ENCODE measurements at regions of chr14 and their contacts with region 1.

Region 1: DNA sequence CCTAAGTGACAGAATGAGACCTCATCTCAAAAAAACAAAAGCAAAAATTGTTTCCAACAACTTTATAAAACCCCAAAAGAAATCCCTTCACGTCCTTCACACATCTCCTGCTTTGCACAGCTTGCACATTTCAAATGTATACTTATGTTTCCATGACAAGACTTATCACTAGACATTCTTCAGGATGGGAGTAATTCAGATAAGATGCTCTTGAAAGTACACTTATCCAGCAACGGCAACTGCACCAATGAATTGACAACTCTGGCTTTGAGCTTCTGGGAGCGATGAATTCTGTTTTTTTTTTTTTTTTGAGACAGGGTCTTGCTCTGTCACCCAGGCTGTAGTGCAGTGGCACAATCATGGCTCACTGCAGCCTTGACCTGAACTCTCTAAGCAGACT is 30.8 kb upstream of the AKAP5 start:
- DNase-seq: no peak
- H3K4me3 ChIP-seq: no peak overlapping the region
- H3K27ac ChIP-seq: no peak overlapping the region
- H3K4me1 ChIP-seq: peaks cover 16% of the 10 kb centered on the region
- H3K27me3 ChIP-seq: no peaks in the 10 kb centered on the region
- CTCF ChIP-seq: no peak
- POLR2A ChIP-seq: no peak

Region 2: GRCh38 chr14:64400829-64401459 is 33.6 kb before region 1 on chr14:
- CTCF ChIA-PET with region 1: interaction called, 12 read pairs
- POLR2A ChIA-PET with region 1: no interaction called
- dilution Hi-C with region 1: no loop called
- intact Hi-C with region 1: no loop called
- DNase-seq: no peak
- H3K4me3 ChIP-seq: no peak overlapping the region
- H3K27ac ChIP-seq: no peak overlapping the region
- H3K4me1 ChIP-seq: no peaks in the 10 kb centered on the region
- H3K27me3 ChIP-seq: no peaks in the 10 kb centered on the region
- CTCF ChIP-seq: no peak
- POLR2A ChIP-seq: no peak

Region 3: DNA sequence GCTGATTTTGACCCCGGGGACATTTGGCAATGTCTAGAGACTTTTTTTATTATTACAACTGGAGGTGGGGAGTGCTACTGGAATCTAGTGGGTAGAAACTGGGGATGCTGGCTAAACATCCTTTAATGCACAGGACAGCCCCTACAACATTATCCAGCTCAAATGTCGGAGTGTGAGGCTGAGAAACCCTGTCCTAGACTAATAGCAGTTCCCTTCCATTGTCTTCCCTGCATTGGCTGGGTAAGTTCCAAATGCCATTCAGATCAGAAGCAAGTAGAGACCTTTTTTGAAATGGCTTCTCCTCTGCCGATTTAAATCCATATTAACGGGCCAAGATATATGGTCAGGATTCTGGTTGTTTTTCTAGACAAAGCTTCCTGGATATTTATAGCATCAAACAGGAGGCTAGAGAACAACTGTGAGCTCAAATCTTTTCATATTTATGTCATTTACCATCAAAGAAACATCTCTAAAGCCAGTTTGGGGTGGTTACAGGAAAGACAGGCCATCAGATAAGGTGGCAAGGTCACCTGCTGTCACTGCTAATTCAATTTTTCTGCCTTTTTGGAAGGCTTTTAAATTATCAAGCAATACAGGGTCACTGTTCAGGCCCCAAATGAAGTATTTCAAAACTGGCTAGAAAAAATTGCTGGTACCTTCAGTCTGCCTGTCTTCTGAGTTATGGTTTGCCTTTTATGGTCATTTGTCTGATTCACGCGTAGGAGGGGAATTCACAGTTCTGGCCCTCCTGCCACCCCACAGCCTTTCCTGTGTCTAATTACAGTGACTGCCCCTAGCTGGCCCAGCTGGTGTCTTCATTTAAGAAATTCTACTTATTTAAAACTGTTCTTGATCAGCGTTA is 10.7 kb after region 1 on chr14:
- CTCF ChIA-PET with region 1: interaction called, 19 read pairs
- POLR2A ChIA-PET with region 1: no interaction called
- dilution Hi-C with region 1: no loop called
- intact Hi-C with region 1: no loop called
- DNase-seq: peak; percentile 84
- H3K4me3 ChIP-seq: no peak overlapping the region
- H3K27ac ChIP-seq: peak overlapping the region; percentile 79
- H3K4me1 ChIP-seq: peaks cover 16% of the 10 kb centered on the region
- H3K27me3 ChIP-seq: no peaks in the 10 kb centered on the region
- CTCF ChIP-seq: no peak
- POLR2A ChIP-seq: no peak

Region 4: GRCh38 chr14:64478634-64479250 is 44.2 kb after region 1 on chr14:
- CTCF ChIA-PET with region 1: interaction called, 67 read pairs
- POLR2A ChIA-PET with region 1: no interaction called
- dilution Hi-C with region 1: no loop called
- intact Hi-C with region 1: loop called (anchors 1 kb)
- DNase-seq: peak; percentile 60
- H3K4me3 ChIP-seq: no peak overlapping the region
- H3K27ac ChIP-seq: no peak overlapping the region
- H3K4me1 ChIP-seq: no peaks in the 10 kb centered on the region
- H3K27me3 ChIP-seq: no peaks in the 10 kb centered on the region
- CTCF ChIP-seq: peak; percentile 9 to 23
- POLR2A ChIP-seq: no peak

Region 5: DNA sequence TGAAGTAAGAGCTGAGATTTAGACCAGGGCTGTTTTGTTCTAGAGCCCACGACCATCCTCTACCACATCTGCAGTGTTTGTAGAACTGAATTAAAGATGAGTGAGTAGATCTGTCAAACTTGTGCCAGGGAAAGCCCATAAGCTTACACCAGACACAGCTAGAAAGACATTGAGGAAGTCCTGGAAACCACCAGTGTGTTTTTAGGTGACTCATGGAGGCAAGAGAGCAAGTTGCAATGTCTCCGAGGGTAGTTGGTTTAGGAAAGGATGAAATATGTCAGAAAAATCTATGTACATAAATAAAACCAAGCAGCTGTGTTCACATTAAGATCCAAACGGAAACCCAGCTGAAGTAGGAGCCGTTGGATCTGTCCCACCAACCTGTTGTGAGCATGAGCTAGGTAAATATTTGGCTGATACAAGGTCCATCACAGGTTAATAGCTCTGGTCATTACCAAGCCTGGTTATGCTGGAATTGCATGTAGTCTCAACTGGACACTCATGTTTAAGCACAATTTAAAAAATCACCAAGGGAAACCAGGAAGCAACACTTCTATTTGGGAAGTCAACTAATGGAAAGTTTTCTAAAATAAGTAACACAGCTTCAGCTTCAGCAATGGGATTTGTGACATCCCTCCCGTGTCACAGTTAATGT is 219.8 kb after region 1 on chr14:
- CTCF ChIA-PET with region 1: no interaction called
- POLR2A ChIA-PET with region 1: no interaction called
- dilution Hi-C with region 1: no loop called
- intact Hi-C with region 1: no loop called
- DNase-seq: peak; percentile 85
- H3K4me3 ChIP-seq: no peak overlapping the region
- H3K27ac ChIP-seq: no peak overlapping the region
- H3K4me1 ChIP-seq: peaks cover 9% of the 10 kb centered on the region
- H3K27me3 ChIP-seq: peaks cover 2% of the 10 kb centered on the region in 2 experiments
- CTCF ChIP-seq: no peak
- POLR2A ChIP-seq: no peak

Region 6: DNA sequence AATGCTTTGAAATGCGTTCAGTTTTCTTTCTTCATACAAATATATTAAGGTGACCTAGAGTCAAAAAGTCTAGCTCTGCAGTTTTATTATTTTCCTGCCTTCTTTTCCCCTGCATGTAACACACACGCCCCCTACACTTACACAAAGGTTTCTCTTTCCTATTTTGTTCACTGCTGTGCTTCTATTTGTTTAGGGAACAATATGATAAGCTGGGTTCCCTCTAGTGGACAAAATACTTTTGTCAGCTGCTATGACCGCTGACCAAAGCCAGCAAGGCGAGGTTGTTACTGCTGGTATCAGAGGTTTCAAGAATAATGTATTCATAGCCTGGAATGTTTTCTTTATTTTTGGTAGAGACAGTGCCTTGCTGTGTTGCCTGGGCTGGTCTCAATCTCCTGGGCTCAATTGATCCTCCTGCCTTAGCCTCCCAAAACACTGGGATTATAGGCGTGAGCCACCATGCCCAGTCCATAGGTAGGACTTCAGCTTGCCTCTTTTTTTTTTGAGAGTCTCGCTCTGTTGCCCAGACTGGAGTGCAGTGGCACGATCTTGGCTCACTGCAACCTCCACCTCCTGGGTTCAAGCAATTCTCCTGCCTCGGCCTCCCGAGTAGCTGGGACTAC is 585.5 kb after region 1 on chr14:
- CTCF ChIA-PET with region 1: no interaction called
- POLR2A ChIA-PET with region 1: no interaction called
- dilution Hi-C with region 1: no loop called
- intact Hi-C with region 1: no loop called
- DNase-seq: peak; percentile 82
- H3K4me3 ChIP-seq: no peak overlapping the region
- H3K27ac ChIP-seq: no peak overlapping the region
- H3K4me1 ChIP-seq: no peaks in the 10 kb centered on the region
- H3K27me3 ChIP-seq: no peaks in the 10 kb centered on the region
- CTCF ChIP-seq: peak; percentile 63
- POLR2A ChIP-seq: no peak

Region 7: DNA sequence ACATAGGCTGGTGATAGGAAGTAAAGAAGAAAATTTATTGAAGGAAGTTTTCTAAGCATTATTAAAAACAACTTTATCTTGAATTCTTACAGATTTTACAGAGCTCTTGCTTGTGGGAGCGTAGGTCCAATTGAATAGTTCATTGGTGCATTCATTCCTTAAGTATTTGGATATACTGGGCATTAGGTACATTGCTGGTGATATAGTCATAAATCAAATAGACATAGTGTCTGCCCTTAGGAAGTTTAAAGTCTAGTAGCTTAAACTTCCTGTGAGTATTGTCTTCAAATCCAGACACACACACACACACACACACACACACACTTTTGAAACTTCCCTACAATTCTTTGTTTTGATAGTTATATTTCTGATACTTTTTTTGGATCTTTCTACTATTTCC is 1204.7 kb after region 1 on chr14:
- CTCF ChIA-PET with region 1: no interaction called
- POLR2A ChIA-PET with region 1: no interaction called
- dilution Hi-C with region 1: no loop called
- intact Hi-C with region 1: no loop called
- DNase-seq: peak; percentile 54
- H3K4me3 ChIP-seq: no peak overlapping the region
- H3K27ac ChIP-seq: no peak overlapping the region
- H3K4me1 ChIP-seq: peaks cover 11% of the 10 kb centered on the region
- H3K27me3 ChIP-seq: no peaks in the 10 kb centered on the region
- CTCF ChIP-seq: no peak
- POLR2A ChIP-seq: no peak